Psoas muscle (tissue), 8 donors: ENCODE measurements at regions of chr11 and their contacts with region 1.

Region 1: DNA sequence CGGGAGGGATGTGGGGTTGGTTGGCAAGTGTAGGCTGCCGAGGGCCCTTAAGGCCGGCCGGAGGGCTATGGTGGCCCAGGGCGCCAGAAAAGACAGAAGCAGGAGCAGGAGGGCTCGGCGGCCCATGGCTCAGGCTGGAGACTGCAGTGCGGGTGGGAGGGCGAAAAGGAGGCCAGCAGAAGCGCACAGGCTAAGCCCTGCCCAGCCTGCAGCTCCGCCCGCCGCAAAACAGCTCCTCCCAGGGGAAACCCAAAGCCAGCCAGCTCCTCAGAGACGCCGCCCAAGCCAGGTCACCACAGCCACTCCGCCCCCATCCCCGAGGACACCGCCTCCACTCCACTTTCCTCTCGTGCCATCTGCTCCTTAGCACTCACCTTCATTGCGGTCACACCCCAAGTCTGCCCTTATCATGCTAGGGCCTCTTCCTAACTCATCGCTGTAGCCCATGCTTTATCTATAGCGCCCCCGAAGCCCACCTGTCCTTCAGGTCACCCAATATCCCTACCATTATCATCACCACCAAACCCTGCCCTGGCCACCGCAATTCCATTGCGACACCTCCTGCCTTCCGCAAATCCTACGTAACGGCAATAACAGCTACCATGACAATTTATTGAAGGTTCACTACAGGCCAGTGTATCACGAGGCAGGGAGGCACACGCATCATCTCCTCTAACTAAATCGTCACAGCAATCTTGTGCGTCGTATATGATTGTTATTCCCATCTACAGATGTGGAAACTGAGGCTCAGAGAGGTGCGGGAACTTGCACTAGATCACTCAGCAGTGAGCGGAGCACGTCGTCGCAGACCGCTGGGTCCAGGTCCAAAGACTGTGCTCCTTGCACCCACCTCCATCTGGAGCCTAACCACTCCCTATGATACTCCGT is at the start of gene PRCP:
- DNase-seq: peak; percentile 92 to 95
- ATAC-seq: peak; percentile 91 to 93 (median 92)
- H3K4me3 ChIP-seq: peak within 1 kb of the TSS; percentile 84
- H3K27ac ChIP-seq: peak within 1 kb of the TSS; percentile 88
- H3K4me1 ChIP-seq: peaks cover 10% of the 10 kb centered on the region
- H3K27me3 ChIP-seq: no peaks in the 10 kb centered on the region
- CTCF ChIP-seq: no peak
- total RNA-seq, gene PRCP: 11.5 to 23.5 (median 15.2) TPM

Region 2: GRCh38 chr11:83193315-83194280 is 293.1 kb after region 1 on chr11 and contains the start of gene ANKRD42:
- intact Hi-C with region 1: loop called in 1 of 2 experiments (anchors 5 kb)
- DNase-seq: peak; percentile 91 to 96
- ATAC-seq: peak; percentile 96 to 98 (median 97)
- H3K4me3 ChIP-seq: peak within 1 kb of the TSS; percentile 86
- H3K27ac ChIP-seq: peak within 1 kb of the TSS; percentile 88
- H3K4me1 ChIP-seq: peaks cover 22% of the 10 kb centered on the region
- H3K27me3 ChIP-seq: no peaks in the 10 kb centered on the region
- CTCF ChIP-seq: no peak
- total RNA-seq, gene ANKRD42: 3.6 to 4.6 (median 3.7) TPM

Region 3: GRCh38 chr11:83285771-83286528 is 385.4 kb after region 1 on chr11 and contains the start of gene CCDC90B:
- intact Hi-C with region 1: loop called in 1 of 2 experiments (anchors 10 kb)
- DNase-seq: peak; percentile 95 to 97
- ATAC-seq: peak; percentile 96 to 97 (median 97)
- H3K4me3 ChIP-seq: peak within 1 kb of the TSS; percentile 84
- H3K27ac ChIP-seq: peak within 1 kb of the TSS; percentile 95
- H3K4me1 ChIP-seq: peaks cover 32% of the 10 kb centered on the region
- H3K27me3 ChIP-seq: no peaks in the 10 kb centered on the region
- CTCF ChIP-seq: no peak
- total RNA-seq, gene CCDC90B: 15.5 to 34.0 (median 23.0) TPM